Motor neuron (in vitro differentiated cells): ENCODE measurements at regions of chr15 and their contacts with region 1.

Region 1: DNA sequence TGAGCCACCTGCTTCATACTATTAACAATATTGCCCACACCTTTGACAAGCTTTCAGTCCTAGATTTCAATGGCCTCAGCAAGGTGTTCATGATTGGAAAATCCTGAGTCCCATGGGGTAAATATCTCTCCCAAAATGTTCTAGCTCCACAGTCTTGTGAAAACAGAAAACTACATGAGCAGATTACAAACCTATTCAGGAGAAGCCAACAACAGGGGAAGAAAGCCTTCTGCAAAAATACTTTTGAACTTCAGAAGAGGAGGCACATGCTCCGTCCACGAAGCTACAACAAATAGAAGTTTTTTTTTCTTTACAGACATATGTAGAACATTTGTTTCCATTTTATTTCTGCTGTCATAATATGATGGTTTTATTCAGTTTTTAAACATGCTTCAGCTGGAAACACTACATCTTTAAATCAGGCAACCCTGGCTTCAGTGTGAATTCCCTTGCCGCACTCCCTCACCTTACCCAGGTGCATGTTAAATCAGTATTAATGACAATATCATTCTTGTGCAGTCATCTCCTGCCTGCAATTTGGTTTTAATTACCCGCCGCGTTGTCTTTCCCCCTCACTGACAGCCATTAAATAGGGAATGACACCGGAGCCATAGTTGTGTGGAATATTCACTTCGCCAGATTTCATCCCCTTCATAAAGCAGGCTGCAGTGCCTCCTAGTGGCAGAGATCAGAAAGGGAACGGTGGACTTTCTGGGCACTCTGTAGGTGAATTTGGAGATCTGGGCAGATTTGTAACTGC is 725.5 kb upstream of the ARRDC4 start:
- ATAC-seq: peak; percentile 71 to 95 (median 86)
- H3K4me3 ChIP-seq: no peak overlapping the region
- H3K27ac ChIP-seq: no peak overlapping the region
- H3K4me1 ChIP-seq: peaks cover 3 to 5% of the 10 kb centered on the region in 2 donors

Region 2: DNA sequence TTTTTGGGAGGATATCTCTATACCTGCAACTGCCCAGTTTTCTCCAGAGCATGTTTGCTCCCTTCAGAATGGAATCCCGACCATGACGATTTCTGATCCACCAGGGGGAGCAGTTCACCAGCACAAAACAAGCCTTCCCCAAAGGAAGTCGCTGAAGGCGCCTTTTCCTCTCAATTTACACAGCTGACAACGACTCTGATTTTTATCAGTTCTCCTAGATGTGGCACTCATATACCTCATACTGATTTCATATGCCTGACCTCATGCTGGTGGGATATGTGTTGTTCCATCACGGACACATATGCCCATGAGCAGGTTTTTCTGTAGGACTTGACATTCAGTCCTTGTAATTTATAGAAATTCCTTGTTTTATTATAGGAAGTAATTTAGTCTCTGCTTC is 1975.5 kb before region 1 on chr15:
- in situ Hi-C with region 1: loop called in 1 of 9 experiments (anchors 25 kb)
- ATAC-seq: peak; percentile 79 to 92 (median 86)
- H3K4me3 ChIP-seq: no peak overlapping the region
- H3K27ac ChIP-seq: no peak overlapping the region
- H3K4me1 ChIP-seq: peaks cover 6 to 10% of the 10 kb centered on the region in 2 donors

Region 3: GRCh38 chr15:95291898-95292472 is 1943.0 kb before region 1 on chr15:
- in situ Hi-C with region 1: loop called in 1 of 9 experiments (anchors 25 kb)
- ATAC-seq: no peak
- H3K4me3 ChIP-seq: no peak overlapping the region
- H3K27ac ChIP-seq: no peak overlapping the region
- H3K4me1 ChIP-seq: peaks cover 47 to 65% of the 10 kb centered on the region in 2 donors

Region 4: DNA sequence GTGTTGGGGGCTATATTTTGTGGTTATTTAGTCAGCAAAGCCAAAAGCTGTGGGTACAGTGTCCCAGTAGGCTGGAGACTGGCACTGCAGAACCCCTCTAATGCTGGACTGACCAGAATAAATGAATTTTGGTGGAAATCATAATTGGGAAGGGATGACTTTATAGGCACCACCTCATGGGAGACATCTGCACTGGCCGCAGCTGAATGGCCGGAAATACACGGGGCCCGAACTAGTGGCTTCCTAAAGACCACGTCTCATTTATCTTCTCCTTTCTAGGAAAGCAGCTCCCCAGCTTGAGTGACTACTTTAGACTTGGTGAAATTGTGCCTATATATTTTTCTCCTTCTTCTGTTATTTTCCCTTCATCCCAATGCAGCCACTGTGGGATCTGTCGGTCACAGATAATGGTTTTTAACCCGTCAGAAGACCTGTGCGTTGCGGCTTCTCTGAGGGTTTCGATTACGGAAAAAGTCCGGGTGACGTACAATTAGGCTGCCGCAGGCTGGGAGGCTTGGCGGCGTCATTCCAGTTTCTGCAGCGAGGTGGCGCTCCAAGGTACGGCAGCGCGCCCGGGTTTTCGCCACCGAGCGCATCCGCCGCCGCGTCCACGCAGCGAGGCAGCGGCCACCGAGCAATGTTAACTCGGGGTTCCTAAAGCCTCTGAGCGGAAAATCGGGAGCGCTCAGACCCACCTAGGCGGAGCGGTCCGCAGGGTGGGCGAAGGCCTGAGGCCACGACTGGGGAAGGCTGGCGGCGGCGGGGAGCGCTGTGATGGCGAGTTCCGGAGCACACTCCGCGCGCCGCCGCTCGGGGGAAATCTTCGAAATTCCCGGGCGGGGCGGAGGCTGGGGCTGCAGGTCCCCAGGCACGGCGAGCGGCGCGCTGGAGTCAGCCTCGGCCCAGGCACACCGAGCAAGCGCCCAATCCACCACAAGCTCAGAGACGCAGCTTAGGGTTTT is 878.3 kb before region 1 on chr15:
- in situ Hi-C with region 1: loop called in 4 of 9 experiments (anchors 10 to 25 kb)
- ATAC-seq: peak; percentile 46 to 80 (median 65)
- H3K4me3 ChIP-seq: peak overlapping the region; percentile 50 to 86 (median 57)
- H3K27ac ChIP-seq: no peak overlapping the region
- H3K4me1 ChIP-seq: peaks cover 30 to 47% of the 10 kb centered on the region in 2 donors

Region 5: GRCh38 chr15:96392380-96393208 is 842.4 kb before region 1 on chr15:
- in situ Hi-C with region 1: loop called in 1 of 9 experiments (anchors 25 kb)
- ATAC-seq: peak in 2 of 8 experiments; percentile 19 to 32
- H3K4me3 ChIP-seq: no peak overlapping the region
- H3K27ac ChIP-seq: no peak overlapping the region
- H3K4me1 ChIP-seq: no peaks in the 10 kb centered on the region

Region 6: DNA sequence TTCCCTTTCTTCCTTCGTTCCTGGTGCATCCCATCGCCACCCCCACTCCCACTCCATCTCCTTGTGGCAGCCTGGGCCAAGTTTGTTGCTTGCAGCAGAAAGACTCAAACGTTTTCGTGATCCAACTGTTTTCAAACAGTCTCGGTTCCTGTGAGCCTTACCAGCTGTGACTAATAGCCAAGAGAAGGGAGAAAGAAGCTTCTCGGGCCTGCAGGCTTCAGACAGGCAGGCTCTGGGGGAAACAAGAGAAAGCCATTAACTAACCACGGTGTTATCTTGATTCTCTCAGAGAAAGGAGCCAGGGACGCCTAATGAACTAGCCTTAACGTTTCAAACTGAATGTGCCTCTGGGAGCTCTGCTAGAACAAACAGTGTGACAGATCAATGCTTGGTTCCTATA is 162.5 kb before region 1 on chr15:
- in situ Hi-C with region 1: no loop called
- ATAC-seq: peak in 3 of 8 experiments; percentile 18 to 39 (median 32)
- H3K4me3 ChIP-seq: no peak overlapping the region
- H3K27ac ChIP-seq: peak overlapping the region in 1 of 2 donors; percentile 28
- H3K4me1 ChIP-seq: peaks cover 0 to 2% of the 10 kb centered on the region in 2 donors

Region 7: GRCh38 chr15:97759363-97759762 is 524.3 kb after region 1 on chr15:
- in situ Hi-C with region 1: loop called in 1 of 9 experiments (anchors 25 kb)
- ATAC-seq: no peak
- H3K4me3 ChIP-seq: no peak overlapping the region
- H3K27ac ChIP-seq: no peak overlapping the region
- H3K4me1 ChIP-seq: no peaks in the 10 kb centered on the region